A549 (cell line): ENCODE measurements at regions of chr1 and their contacts with region 1.

Region 1: GRCh38 chr1:32716312-32717148 is 14.0 kb upstream of the SYNC start:
- DNase-seq: peak; percentile 65 to 68
- ATAC-seq: peak; percentile 81 to 83
- H3K4me3 ChIP-seq: 0 out of 3 replicates have a peak overlapping the region, but pooled peaks have one; percentile 17
- H3K27ac ChIP-seq: peak overlapping the region; percentile 70 to 87
- H3K4me1 ChIP-seq: peaks cover 30% of the 10 kb centered on the region
- CTCF ChIP-seq: no peak
- EP300 ChIP-seq: no peak
- POLR2A ChIP-seq: 0 out of 2 replicates have a peak, but pooled peaks have one; percentile 16
- RAD21 ChIP-seq: no peak

Region 2: GRCh38 chr1:32684167-32684811 is 32.2 kb before region 1 on chr1:
- CTCF ChIA-PET with region 1: interaction called, 10 read pairs
- POLR2A ChIA-PET with region 1: interaction called, 10 read pairs
- DNase-seq: no peak
- ATAC-seq: no peak
- H3K4me3 ChIP-seq: no peak overlapping the region
- H3K27ac ChIP-seq: no peak overlapping the region
- H3K4me1 ChIP-seq: no peaks in the 10 kb centered on the region
- CTCF ChIP-seq: no peak
- EP300 ChIP-seq: no peak
- POLR2A ChIP-seq: no peak
- RAD21 ChIP-seq: no peak

Region 3: GRCh38 chr1:32733582-32734321 is 17.2 kb after region 1 on chr1:
- CTCF ChIA-PET with region 1: interaction called, 52 read pairs
- POLR2A ChIA-PET with region 1: no interaction called
- DNase-seq: no peak
- ATAC-seq: no peak
- H3K4me3 ChIP-seq: no peak overlapping the region
- H3K27ac ChIP-seq: peak overlapping the region in 1 of 2 experiments; percentile 69; a peak in 3 of 6 replicates
- H3K4me1 ChIP-seq: peaks cover 39% of the 10 kb centered on the region
- CTCF ChIP-seq: no peak
- EP300 ChIP-seq: no peak
- POLR2A ChIP-seq: no peak
- RAD21 ChIP-seq: no peak

Region 4: GRCh38 chr1:32753532-32754312 is 37.2 kb after region 1 on chr1:
- CTCF ChIA-PET with region 1: interaction called, 62 read pairs
- POLR2A ChIA-PET with region 1: no interaction called
- DNase-seq: no peak
- ATAC-seq: peak in 1 of 2 experiments; percentile 49; a peak in 3 of 6 replicates
- H3K4me3 ChIP-seq: no peak overlapping the region
- H3K27ac ChIP-seq: peak overlapping the region in 1 of 2 experiments; percentile 36; a peak in 1 of 6 replicates
- H3K4me1 ChIP-seq: peaks cover 44% of the 10 kb centered on the region
- CTCF ChIP-seq: no peak
- EP300 ChIP-seq: no peak
- POLR2A ChIP-seq: no peak
- RAD21 ChIP-seq: no peak

Region 5: GRCh38 chr1:32786856-32787255 is 70.3 kb after region 1 on chr1:
- CTCF ChIA-PET with region 1: interaction called, 383 read pairs
- POLR2A ChIA-PET with region 1: no interaction called
- DNase-seq: peak in 1 of 2 experiments; percentile 30
- ATAC-seq: peak in 1 of 2 experiments; percentile 69; a peak in 4 of 6 replicates
- H3K4me3 ChIP-seq: no peak overlapping the region
- H3K27ac ChIP-seq: no peak overlapping the region
- H3K4me1 ChIP-seq: peaks cover 18% of the 10 kb centered on the region
- CTCF ChIP-seq: peak; percentile 24; the same call in 1 of the 3 replicates
- EP300 ChIP-seq: no peak
- POLR2A ChIP-seq: no peak
- RAD21 ChIP-seq: peak in 1 of 2 experiments; percentile 27; a peak in 2 of 5 replicates

Region 6: DNA sequence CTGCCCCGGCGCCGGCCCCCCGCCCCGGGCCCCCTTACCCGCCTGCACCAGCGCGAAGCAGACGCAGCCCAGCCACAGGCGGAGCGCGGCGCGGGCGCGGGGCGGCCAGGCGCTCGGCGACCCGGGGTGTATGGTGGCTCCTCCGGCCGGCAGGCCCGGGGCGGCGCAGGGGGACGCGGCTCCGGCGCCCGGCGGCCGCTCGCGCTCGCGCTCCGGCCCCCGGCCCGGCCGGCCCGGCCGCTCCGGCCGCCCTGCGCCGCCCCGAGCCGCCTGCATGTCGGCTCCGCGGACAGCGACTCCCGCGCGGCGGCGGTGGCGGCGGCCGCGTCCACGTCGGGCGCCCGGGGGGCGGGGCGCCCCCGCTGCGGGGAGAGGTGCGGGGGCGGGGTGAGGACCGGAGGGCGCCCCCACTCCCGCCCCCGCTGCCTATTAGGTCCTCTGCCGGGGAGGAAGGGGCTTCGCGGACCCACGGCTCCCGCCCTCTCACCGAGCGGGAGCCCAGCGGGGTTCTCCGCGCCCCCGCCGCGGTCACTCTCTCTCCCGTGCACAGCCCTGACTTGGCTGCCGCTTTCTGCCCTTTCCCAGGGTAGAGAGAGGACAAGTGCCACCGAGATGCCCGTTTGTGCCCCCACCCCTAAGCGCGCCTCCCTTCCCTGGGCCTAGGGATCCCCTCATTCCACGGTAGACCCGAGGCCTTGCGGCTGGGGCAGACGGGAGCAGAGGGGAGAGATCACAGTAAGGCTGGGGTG is 154.3 kb after region 1 on chr1 and contains the start of gene FNDC5:
- CTCF ChIA-PET with region 1: interaction called, 22 read pairs
- POLR2A ChIA-PET with region 1: no interaction called
- DNase-seq: no peak
- ATAC-seq: peak; percentile 39 to 66
- H3K4me3 ChIP-seq: peak within 1 kb of the TSS; percentile 58
- H3K27ac ChIP-seq: peak within 1 kb of the TSS; percentile 52 to 84; a peak in 4 of 6 replicates
- H3K4me1 ChIP-seq: 0 out of 3 replicates have a peak, but pooled peaks cover 2% of the 10 kb centered on the region
- CTCF ChIP-seq: no peak
- EP300 ChIP-seq: no peak
- POLR2A ChIP-seq: no peak
- RAD21 ChIP-seq: no peak
- polyA plus RNA-seq, gene FNDC5: 0.26 and 0.78 TPM in 2 replicates

Region 7: GRCh38 chr1:33055210-33056008 is 338.9 kb after region 1 on chr1:
- CTCF ChIA-PET with region 1: no interaction called
- POLR2A ChIA-PET with region 1: no interaction called
- DNase-seq: peak; percentile 64 to 92
- ATAC-seq: peak; percentile 92 to 97
- H3K4me3 ChIP-seq: no peak overlapping the region
- H3K27ac ChIP-seq: peak overlapping the region; percentile 71 to 78
- H3K4me1 ChIP-seq: peaks cover 13% of the 10 kb centered on the region
- CTCF ChIP-seq: peak; percentile 55
- EP300 ChIP-seq: no peak
- POLR2A ChIP-seq: no peak
- RAD21 ChIP-seq: peak; percentile 57 to 65